ENCODE measurements at regions of chr10 and their contacts with region 1.

Region 1: DNA sequence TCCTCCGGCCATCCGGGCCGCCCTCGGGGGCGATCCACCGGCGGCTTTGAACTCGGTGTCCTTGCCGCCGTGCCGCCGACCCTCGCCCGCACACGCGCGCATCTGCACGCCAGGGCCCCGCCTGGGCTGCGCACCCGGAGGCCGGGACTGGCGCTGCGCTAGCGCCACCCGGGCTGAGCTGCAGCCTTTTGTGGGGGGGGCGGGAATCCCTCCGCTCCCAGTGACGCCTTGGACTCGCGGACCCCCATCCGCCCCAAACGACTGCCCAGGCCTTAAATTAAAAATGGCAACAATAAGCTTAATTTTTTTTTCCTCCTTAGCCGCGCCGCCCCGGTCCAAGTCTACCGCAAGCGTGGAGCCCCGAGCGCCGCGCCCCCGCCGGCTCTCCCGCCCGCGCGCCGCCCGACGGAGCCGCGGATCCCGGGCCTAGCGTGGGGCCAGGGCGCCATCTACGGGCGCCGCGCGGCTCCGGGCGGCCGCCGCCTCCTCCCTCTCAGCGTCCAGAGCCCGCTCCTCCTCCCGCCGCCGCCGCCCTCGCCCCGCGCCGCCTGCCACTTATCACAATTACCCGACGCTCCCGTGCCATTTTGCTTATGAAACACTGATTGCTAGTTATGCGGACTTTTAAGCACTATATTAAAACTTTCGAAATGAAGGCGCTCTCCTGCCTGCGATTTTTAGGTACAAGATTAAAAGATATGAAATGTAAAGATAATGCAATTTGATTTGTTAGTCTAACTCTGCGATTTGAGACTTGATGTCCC is 7.5 kb upstream of the EBF3 start:
- DNase-seq: no peak
- H3K4me3 ChIP-seq: no peak overlapping the region
- CTCF ChIP-seq: no peak
- POLR2A ChIP-seq: no peak

Region 2: DNA sequence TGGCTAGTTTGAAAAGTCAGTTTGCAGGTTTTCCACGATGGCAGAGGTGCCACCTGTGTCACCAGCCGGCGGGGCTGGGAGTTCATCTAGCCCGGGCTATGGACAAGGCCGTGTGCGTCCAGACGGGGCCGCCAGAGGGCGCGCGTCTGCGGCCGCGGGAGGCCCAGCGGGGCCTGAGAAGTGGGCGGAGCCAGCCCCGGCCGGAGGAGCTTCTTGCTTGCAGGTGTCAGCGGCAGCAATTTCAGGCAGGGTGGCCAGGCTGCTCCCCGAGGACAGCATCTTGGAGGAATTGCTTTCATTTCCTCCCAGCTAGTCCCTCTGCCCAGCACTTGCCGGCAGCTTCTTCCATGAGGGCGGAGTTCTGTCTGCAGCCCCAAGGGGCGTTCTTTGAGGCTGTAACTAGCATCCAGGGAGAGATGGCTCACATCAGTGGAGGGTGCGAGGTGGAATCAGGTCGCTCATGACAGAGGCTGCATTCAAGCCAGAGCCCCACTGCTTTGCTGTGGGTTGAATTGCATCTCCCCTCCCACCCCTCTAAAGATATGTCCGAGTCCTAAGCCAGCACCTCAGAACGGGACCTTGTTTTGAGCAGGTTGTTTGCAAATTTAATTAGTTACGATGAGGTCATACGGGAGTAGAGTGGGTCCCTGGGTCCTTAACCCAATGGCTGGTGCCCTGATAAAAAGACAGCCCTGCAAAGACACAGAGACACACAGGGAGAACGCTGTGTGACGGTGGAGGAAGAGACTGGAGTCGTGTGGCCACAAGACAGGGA is 1759.4 kb before region 1 on chr10:
- intact Hi-C with region 1: loop called (anchors 5 kb)
- DNase-seq: peak; percentile 55 to 95
- H3K4me3 ChIP-seq: no peak overlapping the region
- CTCF ChIP-seq: no peak
- POLR2A ChIP-seq: no peak

Region 3: GRCh38 chr10:128631801-128632241 is 1339.7 kb before region 1 on chr10:
- intact Hi-C with region 1: loop called (anchors 10 kb)
- DNase-seq: no peak
- H3K4me3 ChIP-seq: no peak overlapping the region
- CTCF ChIP-seq: no peak
- POLR2A ChIP-seq: no peak

Region 4: DNA sequence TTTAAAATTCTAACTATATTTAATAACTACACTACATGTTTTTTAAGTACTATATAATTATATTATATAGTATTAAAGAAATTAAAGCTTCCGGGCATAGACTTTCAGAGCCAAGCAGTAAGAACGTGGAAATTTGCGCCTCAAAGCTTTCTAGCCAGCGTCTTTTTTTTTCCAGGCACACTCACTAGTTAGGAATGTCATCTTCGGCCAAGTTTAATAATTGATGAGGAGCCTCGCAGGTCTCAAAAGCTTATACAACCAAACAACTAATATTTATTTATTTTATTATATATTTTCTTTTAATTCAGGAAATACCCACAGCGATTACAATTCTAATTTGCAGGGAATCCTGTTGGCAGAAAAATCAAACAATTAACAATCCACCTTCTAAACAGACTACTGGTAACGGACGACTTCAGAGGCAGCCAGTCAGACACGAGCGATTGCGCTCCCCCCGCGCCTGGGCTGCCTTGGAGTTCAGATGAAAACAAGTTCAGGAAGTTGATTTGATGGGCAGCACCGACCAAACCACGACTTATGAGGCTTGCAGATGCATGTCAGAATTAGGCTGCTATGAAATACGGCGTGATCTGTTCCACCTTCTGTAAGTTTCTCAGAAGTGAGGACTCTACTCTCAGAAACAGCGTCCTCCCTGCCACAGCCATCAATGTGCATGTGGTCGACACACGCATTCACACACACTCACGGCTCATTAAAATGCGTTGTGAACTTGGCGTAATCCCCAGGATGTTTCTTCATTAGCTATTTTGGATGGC is 936.3 kb before region 1 on chr10:
- intact Hi-C with region 1: loop called (anchors 2 kb)
- DNase-seq: peak; percentile 46 to 92
- H3K4me3 ChIP-seq: no peak overlapping the region
- CTCF ChIP-seq: no peak
- POLR2A ChIP-seq: no peak

Region 5: DNA sequence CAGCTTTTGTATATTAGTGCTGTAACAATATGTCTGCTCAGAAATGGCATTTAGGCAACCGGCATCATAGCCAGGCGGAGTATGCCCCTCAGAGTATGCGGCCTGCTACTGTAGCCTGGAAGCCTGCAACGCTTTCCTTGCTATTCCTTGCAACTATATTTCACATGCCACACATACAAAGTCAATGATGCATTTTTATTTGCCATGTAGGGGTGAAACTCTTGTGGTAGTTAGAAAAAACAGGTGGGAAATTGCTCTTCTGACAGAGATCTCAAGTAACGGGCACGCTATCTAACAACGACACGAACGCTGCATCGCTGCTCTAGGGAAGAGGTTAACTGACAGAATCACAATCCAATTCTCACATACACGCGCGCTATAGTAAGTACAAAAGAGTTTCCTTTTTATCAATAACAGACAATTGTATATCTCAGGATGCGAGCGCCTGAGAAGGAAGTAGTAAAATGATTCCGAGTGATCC is 13.4 kb before region 1 on chr10:
- intact Hi-C with region 1: no loop called
- DNase-seq: peak in 1 of 2 donors; percentile 80
- H3K4me3 ChIP-seq: no peak overlapping the region
- CTCF ChIP-seq: no peak
- POLR2A ChIP-seq: no peak

Measured in lower leg skin (tissue), 4 donors.